Right ventricle myocardium inferior (tissue), 1 donor: ENCODE measurements at regions of chr13 and their contacts with region 1.

Region 1: GRCh38 chr13:60066226-60066625 is 97.5 kb downstream of the DIAPH3 start:
- DNase-seq: no peak
- ATAC-seq: no peak

Region 2: GRCh38 chr13:60120617-60121336 is 54.6 kb after region 1 on chr13:
- intact Hi-C with region 1: loop called (anchors 10 kb)
- DNase-seq: no peak
- ATAC-seq: no peak

Region 3: GRCh38 chr13:60671386-60671785 is 605.2 kb after region 1 on chr13:
- intact Hi-C with region 1: no loop called
- DNase-seq: no peak
- ATAC-seq: no peak